Ascending aorta (tissue), 2 donors: ENCODE measurements at regions of chr16 and their contacts with region 1.

Region 1: GRCh38 chr16:10737068-10737625 is 6.5 kb upstream of the NUBP1 start:
- DNase-seq: peak in 1 of 2 donors; percentile 80
- H3K4me3 ChIP-seq: peak overlapping the region in 1 of 2 donors; percentile 33
- H3K27ac ChIP-seq: peak overlapping the region; percentile 85 to 87
- H3K4me1 ChIP-seq: peaks cover 9 to 16% of the 10 kb centered on the region in 2 donors
- H3K27me3 ChIP-seq: no peaks in the 10 kb centered on the region
- CTCF ChIP-seq: peak; percentile 85 to 92 (median 86)

Region 2: DNA sequence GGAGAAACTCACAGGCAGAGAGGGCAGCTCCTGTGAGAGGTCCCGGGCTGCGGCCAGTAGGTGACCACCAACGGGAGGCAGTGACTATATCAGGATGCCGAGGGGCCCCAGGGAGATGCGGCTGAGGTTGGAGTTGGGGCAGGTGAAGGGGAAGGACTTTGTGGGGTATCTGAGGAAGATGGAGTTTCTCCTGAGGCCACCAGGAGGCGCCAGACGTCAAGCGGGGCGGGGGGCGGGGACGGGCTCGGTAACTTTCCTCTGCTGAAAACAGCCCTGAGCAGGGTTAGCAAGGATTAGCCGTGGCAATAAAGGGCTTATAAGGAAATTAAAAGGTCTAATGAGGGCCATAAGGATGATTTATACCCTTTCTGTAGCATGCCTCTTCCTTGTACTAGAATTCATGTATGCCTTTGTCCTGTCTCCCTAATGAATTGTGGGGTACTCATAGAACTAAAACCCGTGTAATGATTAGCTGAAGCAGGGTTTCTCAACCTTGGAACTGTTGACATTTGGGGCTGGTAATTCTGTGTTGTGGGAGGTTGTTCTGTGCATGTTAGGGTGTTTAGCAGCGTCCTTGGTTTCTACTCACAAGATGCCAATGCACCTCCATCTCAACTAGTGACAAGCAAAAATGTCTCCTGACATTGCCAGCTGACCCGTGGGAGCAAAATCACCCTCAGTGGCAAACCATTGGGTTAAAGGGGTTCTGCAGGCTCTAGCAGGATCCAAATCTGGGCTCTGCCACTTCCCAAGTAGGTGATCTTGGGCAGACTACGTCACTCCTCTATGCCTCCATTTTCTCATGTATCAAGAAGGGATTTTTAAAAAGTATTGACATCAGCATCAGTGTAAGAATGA is 480.1 kb before region 1 on chr16:
- intact Hi-C with region 1: loop called (anchors 2 kb)
- DNase-seq: no peak
- H3K4me3 ChIP-seq: no peak overlapping the region
- H3K27ac ChIP-seq: no peak overlapping the region
- H3K4me1 ChIP-seq: no peaks in the 10 kb centered on the region
- H3K27me3 ChIP-seq: no peaks in the 10 kb centered on the region
- CTCF ChIP-seq: peak; percentile 38 to 85 (median 77)

Region 3: GRCh38 chr16:10509534-10510025 is 227.6 kb before region 1 on chr16:
- intact Hi-C with region 1: loop called (anchors 1 kb)
- DNase-seq: no peak
- H3K4me3 ChIP-seq: no peak overlapping the region
- H3K27ac ChIP-seq: no peak overlapping the region
- H3K4me1 ChIP-seq: peaks cover 4 to 6% of the 10 kb centered on the region in 2 donors
- H3K27me3 ChIP-seq: no peaks in the 10 kb centered on the region
- CTCF ChIP-seq: peak; percentile 63 to 79 (median 72)

Region 4: DNA sequence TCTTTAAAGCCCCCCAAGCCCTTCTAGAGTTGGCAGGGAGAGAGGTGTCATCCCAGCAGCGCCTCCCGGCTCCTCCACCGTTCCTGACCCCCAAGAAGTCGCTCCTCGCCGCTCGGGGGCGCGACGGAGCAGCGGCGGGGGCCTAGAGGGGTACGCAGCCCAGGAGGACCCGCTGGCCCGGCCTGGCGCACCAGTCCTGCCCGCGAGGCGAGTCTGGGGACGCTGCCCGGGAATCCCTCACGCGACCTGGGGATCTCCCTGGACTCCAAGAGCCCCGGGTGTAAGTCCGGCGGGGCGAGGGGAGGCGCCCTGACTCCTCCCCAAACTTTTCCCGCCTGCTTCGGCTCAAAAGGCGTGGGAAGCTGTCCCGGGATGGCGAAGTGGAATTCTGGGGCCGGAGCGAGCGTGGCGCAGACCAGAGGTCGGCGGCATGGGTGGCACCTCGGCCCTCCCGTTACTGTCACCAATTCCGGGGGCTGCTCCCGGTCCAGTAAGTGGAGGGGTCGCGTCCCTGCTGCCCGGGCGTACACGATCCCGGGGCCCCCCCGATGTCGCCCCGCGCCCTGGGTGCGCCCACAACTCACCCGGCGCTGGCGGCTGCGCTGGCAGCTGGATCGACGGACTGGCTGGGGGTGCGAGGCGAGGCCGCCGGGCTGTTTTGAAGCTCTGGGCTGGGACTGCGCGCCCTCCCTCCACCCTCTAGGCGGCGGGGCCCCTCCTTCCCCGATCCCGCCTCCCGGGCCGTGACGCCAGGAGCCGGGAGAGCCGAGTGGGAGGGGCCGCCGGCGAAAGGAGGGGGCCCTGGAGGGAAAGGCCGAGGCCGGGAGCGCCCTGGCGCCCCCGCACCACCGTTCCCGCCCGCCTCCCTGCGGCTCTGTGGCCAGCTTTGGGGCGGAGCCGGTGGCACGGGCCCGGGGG is 156.9 kb before region 1 on chr16 and contains the start of gene EMP2:
- intact Hi-C with region 1: loop called (anchors 2 kb)
- DNase-seq: peak; percentile 43 to 90
- H3K4me3 ChIP-seq: peak within 1 kb of the TSS; percentile 72 to 90
- H3K27ac ChIP-seq: peak within 1 kb of the TSS; percentile 87 to 97
- H3K4me1 ChIP-seq: peaks cover 6 to 42% of the 10 kb centered on the region in 2 donors
- H3K27me3 ChIP-seq: no peaks in the 10 kb centered on the region
- CTCF ChIP-seq: peak; percentile 45 to 72 (median 54)
- total RNA-seq, gene EMP2: 49.2 TPM

Region 5: DNA sequence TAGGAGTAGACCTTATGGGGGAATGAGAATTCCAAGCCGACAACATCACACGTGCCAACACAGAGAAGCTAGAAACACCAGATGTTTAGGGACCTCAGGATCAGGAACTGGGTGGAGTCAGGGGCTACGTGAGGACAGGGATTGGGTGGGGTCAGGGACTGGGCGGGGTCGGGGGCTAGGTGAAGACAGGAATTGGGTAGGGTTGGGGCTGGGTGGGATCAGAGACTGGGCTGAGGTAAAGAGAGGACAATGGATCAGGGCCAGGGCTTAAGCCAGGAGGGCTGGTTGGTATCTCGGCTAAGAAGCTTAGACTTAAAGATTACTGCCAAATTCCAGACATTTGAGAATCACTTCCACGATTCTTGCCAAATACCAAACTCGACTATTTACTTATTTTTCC is 54.0 kb before region 1 on chr16:
- intact Hi-C with region 1: no loop called
- DNase-seq: no peak
- H3K4me3 ChIP-seq: no peak overlapping the region
- H3K27ac ChIP-seq: no peak overlapping the region
- H3K4me1 ChIP-seq: no peaks in the 10 kb centered on the region
- H3K27me3 ChIP-seq: no peaks in the 10 kb centered on the region
- CTCF ChIP-seq: no peak

Region 6: GRCh38 chr16:10754941-10755340 is 17.8 kb after region 1 on chr16:
- intact Hi-C with region 1: loop called (anchors 2 kb)
- DNase-seq: no peak
- H3K4me3 ChIP-seq: no peak overlapping the region
- H3K27ac ChIP-seq: peak overlapping the region; percentile 77 to 80
- H3K4me1 ChIP-seq: peaks cover 5 to 17% of the 10 kb centered on the region in 2 donors
- H3K27me3 ChIP-seq: no peaks in the 10 kb centered on the region
- CTCF ChIP-seq: no peak

Region 7: DNA sequence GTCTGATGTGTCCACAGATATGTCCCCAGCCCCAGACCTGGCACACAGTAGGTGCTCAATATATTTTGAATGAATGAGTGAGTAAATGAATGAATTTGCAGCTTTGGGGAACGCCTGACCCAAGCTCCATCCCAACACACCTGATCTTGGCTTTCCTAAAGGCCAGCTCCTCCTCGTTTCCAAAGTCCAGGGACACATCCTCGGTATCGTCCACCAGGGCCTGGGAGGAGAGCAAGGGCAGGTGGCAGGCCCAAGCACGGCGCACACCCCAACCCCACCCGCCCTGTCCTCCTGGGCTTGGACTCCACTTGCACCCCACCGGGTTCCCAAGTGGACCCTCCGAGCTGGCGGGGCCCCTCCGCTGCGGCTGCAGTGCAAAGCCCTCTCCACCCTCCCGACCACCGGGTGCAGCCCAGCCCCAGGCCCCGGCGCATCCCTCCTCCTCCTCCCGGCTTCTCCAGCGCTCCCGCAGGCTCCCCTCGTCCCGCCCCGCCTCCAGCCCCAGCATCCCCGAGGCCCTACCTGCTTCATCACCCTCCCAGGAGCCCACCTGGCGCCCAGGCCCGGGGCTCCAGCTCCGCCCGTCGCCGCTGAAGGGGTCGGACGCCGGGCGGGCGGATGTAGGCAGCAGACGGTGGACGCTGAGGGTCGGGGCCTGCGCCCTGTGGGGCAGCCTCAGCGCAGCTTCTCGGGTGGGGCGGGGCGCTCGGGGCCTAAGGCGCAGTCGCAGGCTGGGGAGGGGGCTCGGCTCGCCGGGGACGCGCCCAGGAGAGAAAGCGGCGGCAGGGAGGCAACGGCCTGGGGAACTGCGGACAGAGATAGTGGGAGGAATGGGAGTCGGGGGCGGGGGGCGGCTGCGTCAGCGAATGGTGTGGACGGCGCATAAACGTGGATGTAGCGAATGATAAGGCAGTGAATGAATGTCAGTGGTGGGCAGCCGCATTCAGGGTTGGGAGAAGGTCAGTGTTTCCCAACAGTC is 81.1 kb after region 1 on chr16 and contains the start of gene TVP23A:
- intact Hi-C with region 1: no loop called
- DNase-seq: no peak
- H3K4me3 ChIP-seq: peak within 1 kb of the TSS; percentile 18 to 62
- H3K27ac ChIP-seq: no peak within 1 kb of the TSS
- H3K4me1 ChIP-seq: peaks cover 0 to 5% of the 10 kb centered on the region in 2 donors
- H3K27me3 ChIP-seq: no peaks in the 10 kb centered on the region
- CTCF ChIP-seq: no peak
- total RNA-seq, gene TVP23A: not detected

Region 8: DNA sequence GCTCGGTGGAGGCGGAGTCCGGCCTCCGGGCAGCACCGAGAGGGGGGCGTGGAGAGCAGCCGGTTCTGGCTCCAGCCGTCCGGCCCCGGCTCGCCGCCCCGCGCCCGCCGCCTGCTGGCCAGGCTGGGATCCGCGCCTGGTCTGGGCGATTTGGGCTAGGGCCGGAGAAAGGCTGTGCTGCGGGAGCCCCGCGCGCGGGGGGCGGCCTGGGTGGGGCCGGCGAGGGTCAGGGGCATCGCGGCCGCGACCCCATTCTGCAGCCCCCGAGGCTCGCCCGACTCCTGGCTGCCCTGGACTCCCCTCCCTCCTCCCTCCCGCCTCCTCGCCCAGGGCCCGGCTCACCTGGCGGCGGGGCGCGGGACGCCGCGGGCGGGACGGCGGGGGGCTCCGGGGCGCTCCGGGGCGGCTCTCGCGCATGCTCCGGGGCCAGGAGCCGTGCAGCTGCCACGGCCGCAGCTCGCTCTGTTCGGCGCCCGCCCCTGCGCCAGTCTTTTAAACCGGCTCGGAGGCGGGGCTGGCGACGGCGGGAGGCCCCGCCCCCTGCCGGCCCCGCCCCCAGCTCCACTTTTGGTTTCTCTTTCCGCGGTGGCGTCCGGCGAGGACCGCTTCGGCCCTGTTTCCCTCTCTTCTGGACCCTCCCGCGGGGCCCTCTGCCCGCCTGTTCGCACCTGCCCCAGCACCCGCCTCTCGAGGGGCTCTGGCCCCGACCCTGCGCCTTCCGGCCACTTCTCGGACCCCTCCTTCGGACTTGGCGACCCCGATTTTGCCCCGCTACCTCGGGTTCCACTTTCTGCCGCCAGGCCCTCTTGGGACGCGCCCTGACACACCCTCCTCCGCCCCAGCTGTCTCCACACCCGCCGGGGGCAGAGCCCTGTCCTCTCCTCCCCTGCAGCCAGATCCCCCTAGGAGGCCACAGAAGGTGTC is 518.9 kb after region 1 on chr16 and contains the start of gene SOCS1:
- intact Hi-C with region 1: loop called (anchors 5 kb)
- DNase-seq: peak; percentile 43 to 89
- H3K4me3 ChIP-seq: peak within 1 kb of the TSS; percentile 79 to 80
- H3K27ac ChIP-seq: peak within 1 kb of the TSS; percentile 90 to 96
- H3K4me1 ChIP-seq: peaks cover 10 to 25% of the 10 kb centered on the region in 2 donors
- H3K27me3 ChIP-seq: no peaks in the 10 kb centered on the region
- CTCF ChIP-seq: peak; percentile 84 to 97 (median 88)
- total RNA-seq, gene SOCS1: 1.8 TPM

Region 9: DNA sequence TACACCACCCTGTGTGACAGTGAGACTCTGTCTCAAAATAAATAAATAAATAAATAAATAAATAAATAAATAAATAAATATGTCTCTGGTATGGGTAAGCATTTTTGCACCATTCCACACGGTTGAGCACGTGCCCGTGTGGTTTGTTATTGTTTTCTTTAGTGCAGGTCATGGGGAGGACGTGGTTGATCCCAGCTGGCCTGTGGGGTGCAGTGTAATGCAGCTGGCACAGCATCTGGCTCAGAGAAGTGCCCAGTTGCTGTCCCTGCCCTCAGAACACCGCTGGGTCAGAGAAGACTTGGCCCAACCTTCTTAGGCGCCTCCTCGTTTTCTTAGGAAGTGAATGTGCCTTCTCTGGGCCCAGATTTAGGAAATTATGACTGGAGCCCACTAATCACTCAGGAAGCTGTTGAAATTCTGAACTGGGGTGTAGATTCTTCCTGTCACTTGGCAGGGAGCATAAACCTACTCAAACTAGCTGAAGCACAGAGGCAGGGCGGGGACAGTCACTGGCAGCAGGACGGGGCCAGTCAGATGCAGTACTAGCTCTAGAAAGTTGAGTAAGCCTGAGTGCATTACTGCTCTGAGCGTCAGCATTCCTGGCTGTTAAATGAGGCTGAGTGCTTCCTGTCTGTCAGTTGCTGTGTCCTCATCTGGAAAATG is 1325.3 kb after region 1 on chr16:
- intact Hi-C with region 1: loop called (anchors 5 kb)
- DNase-seq: peak; percentile 89 to 98
- H3K4me3 ChIP-seq: no peak overlapping the region
- H3K27ac ChIP-seq: peak overlapping the region; percentile 89 to 94
- H3K4me1 ChIP-seq: peaks cover 7 to 31% of the 10 kb centered on the region in 2 donors
- H3K27me3 ChIP-seq: no peaks in the 10 kb centered on the region
- CTCF ChIP-seq: no peak